ENCODE measurements at regions of chr10 and their contacts with region 1.

Region 1: DNA sequence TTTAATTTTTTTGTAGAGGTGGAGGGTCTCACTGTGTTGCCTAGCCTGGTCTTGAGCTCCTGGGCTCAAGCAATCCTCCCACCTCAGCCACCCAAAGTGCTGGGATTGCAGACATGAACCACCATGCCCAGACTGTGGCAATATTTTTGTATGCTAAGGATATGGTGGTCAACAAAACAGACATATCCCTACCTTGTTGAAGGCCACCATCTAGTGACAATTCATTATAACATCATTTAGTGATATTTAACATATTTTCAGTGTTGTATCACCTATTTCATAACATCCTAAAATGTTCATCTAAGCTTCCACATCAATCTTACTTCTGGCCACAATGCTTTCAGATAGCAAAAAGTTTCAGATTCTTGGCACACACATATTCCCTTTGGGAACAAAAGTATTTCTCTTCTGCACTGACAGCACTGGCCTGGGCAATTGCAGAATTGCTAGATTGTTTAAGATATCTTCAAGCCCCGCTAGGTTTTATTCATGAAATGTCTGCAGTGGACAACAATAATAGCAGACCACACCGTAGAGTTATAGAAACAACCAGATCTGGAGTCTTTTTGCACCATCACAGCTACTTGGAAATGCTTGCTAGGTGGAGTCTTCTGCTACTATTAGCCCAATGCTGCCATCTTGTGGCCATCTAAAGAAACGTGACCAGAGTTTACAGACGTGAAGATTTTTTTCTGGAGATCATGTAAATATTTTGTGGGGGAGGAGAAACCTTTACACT is 58.4 kb downstream of the DNAJC12 start:
- DNase-seq: peak; percentile 68 to 89 (median 77)
- H3K4me3 ChIP-seq: no peak overlapping the region
- H3K27ac ChIP-seq: no peak overlapping the region
- H3K4me1 ChIP-seq: no peaks in the 10 kb centered on the region
- H3K27me3 ChIP-seq: no peaks in the 10 kb centered on the region
- CTCF ChIP-seq: peak; percentile 77 to 94 (median 86)
- POLR2A ChIP-seq: no peak

Region 2: DNA sequence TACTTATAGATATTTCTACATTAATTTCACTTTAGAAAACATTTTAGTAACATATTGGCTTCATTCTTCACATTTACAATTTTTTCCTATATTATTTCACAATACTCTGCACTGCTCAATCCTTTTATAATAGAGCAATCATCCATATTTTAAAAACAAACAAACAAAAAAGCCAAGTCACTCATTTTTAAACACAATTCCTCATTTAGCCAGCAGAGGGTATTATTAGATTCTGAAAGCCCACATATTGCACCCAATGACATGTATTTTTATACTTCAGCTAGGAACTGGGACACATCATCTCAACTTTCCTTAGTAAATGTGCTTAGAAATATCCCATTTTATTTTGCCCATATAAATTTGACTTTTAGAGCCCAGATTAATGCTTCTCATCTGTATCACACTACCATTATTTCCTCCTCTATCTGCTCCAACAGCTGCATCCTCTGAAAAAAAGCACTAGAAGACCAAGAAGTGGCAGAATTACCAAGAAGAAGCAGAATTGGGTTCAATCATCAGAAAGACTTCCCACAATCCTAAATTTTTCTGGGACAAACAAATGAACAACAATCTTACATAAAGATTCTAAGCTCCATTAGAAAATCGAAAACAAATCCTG is 113.1 kb before region 1 on chr10:
- intact Hi-C with region 1: loop called in 1 of 2 experiments (anchors 5 kb)
- DNase-seq: no peak
- H3K4me3 ChIP-seq: no peak overlapping the region
- H3K27ac ChIP-seq: no peak overlapping the region
- H3K4me1 ChIP-seq: no peaks in the 10 kb centered on the region
- H3K27me3 ChIP-seq: no peaks in the 10 kb centered on the region
- CTCF ChIP-seq: peak; percentile 22 to 70 (median 58)
- POLR2A ChIP-seq: no peak

Region 3: DNA sequence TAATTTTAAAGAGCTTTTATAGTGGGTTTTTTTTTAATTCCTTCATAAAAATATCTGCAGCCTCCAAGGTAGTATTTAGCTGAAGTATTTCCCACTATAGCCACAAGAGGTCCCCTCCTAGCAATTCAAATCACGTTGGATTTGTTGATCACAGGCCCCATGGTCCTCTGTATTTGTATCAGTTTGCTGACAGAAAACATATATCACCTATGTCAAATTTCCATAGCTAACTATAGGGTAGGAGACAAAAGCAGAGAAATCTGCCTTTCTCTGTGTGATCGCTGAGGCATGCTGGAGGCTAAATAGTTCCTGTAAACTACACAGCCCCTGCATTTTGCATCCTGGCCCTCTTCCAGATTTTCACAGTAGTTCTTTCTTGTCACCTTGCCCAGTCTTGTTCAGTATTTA is 81.9 kb before region 1 on chr10:
- intact Hi-C with region 1: loop called in 1 of 2 experiments (anchors 5 kb)
- DNase-seq: peak in 4 of 7 donors; percentile 19 to 38 (median 22)
- H3K4me3 ChIP-seq: no peak overlapping the region
- H3K27ac ChIP-seq: no peak overlapping the region
- H3K4me1 ChIP-seq: peaks cover 0 to 4% of the 10 kb centered on the region in 2 donors
- H3K27me3 ChIP-seq: peaks cover 5% of the 10 kb centered on the region
- CTCF ChIP-seq: peak; percentile 45 to 75 (median 62)
- POLR2A ChIP-seq: no peak